Ovary (tissue), 10 donors: ENCODE measurements at regions of chr1 and their contacts with region 1.

Region 1: DNA sequence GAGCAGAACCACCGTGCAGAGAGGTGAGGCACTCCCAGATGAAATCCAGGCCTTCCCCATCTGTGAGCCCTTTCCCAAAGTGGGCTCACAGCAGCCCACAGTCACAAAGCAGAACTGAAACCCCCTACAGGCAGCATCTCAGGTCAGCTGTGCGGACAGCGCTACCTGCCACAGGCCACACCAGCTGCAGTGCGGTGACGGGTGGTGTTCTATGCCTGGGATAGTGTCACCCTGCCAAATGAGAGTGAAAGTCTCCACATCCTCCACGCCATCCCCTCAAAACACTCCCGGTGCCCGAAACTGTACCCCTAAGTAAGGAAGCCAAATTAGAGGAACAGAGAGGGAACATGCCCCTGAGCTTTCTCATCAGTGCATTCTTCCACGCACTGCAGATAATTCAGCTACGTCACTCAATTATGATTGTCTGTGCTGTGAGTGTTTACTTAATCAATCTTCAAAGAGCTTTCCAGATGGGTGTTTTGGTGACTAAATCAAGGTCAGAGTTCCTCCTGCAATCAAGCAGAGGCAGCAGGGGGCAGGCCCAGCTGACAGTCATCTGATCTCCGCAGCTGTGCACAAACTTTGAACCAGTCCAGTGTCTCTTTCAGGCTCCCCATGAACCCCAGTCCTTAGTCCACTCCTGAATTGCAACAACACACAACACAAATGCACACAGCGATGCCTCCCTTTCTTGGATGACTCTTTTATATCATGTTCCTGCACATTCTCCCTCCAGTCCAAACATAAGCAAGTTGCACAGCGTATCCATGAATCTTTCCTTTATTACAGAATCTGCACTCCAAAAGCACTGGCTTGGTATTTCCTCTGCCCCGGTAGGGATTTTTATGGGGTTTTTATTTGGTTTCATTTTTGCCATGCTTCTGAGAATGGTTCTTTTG is 150.0 kb downstream of the TOMM20 start:
- DNase-seq: peak in 1 of 5 donors; percentile 56
- H3K4me3 ChIP-seq: no peak overlapping the region
- H3K27ac ChIP-seq: peak overlapping the region in 1 of 2 donors; percentile 83
- H3K4me1 ChIP-seq: peaks cover 34% of the 10 kb centered on the region
- H3K27me3 ChIP-seq: no peaks in the 10 kb centered on the region
- CTCF ChIP-seq: no peak
- EP300 ChIP-seq: no peak
- POLR2A ChIP-seq: no peak

Region 2: DNA sequence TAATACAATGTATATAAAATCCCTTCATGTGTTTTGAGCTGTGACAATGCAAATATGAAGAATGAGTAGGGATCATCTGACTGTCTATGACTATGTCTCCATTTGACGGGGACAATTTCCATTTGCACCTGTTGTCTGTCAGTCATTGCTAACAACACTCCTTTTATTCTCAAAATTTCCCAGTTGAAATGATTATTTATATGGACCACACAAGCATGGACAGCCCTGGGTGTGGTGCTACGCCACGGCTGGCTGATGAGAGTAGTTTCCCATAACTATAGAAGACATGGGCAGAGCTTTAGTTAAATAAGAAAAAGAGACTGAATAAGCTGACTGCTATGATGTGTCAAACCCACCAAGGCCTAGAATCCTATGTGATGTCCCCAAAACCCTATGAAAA is 1515.3 kb before region 1 on chr1:
- intact Hi-C with region 1: no loop called
- DNase-seq: no peak
- H3K4me3 ChIP-seq: no peak overlapping the region
- H3K27ac ChIP-seq: no peak overlapping the region
- H3K4me1 ChIP-seq: no peaks in the 10 kb centered on the region
- H3K27me3 ChIP-seq: no peaks in the 10 kb centered on the region
- CTCF ChIP-seq: no peak
- EP300 ChIP-seq: no peak
- POLR2A ChIP-seq: no peak

Region 3: DNA sequence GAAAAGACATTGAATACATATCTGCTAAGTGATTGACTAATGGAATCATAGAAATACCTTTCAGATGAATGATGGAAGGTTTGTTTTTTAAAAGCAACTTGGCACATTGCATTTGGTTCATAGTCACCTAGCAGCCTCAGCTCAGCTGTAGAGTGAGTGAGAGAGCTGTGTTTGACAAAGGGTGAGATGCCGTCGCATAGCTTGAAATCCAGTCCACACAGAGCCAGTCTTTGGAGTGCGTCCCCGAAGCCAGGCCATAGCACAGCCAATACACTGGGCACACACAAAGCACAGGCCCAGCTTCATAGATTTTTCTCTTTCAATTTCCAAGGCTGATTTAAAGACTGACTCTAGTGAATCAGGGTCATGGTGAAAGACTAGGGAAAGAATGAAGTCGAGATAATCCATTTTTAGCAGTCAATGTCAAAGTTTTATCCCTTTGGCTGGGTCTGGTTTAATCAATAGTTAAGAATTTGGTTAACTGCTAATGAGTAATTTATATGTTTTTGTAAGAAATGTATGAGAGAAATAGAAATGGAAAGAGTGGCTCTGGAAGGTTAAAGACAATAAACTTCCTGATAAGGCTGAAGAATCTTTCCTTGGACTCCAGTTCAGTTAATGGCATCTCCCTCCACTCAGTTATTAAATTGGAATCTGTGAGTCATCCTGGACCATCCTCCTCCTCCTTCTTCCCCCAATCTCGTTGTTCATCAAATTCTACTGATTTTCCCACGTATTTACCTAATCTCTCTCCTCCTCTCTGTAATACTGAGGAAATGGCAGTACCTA is 267.5 kb before region 1 on chr1:
- intact Hi-C with region 1: no loop called
- DNase-seq: no peak
- H3K4me3 ChIP-seq: no peak overlapping the region
- H3K27ac ChIP-seq: no peak overlapping the region
- H3K4me1 ChIP-seq: peaks cover 2% of the 10 kb centered on the region
- H3K27me3 ChIP-seq: no peaks in the 10 kb centered on the region
- CTCF ChIP-seq: no peak
- EP300 ChIP-seq: no peak
- POLR2A ChIP-seq: no peak

Region 4: GRCh38 chr1:234918181-234918841 is 60.3 kb before region 1 on chr1:
- intact Hi-C with region 1: loop called in 1 of 4 experiments (anchors 10 kb)
- DNase-seq: peak in 1 of 5 donors; percentile 31
- H3K4me3 ChIP-seq: no peak overlapping the region
- H3K27ac ChIP-seq: peak overlapping the region; percentile 51 to 58
- H3K4me1 ChIP-seq: peaks cover 2% of the 10 kb centered on the region
- H3K27me3 ChIP-seq: no peaks in the 10 kb centered on the region
- CTCF ChIP-seq: no peak
- EP300 ChIP-seq: no peak
- POLR2A ChIP-seq: no peak

Region 5: DNA sequence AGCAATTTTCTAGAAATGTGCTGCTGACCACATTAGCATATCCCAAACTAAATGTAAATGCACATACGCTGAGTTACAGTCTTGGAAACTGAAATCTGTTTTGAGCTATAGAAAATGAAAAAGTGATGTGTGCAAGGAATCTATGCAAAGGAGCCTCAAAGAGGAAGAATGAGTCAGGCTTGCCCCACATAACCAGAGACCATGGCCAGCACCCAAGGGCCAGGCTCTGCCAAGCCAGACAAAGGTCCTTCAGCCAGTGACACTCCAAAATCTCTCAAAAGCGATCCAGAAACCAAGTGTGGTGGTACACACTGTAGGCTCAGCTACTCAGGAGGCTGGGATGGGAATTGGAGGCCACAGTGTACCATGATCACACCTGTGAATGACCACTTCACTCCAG is 45.2 kb before region 1 on chr1:
- intact Hi-C with region 1: no loop called
- DNase-seq: no peak
- H3K4me3 ChIP-seq: no peak overlapping the region
- H3K27ac ChIP-seq: no peak overlapping the region
- H3K4me1 ChIP-seq: peaks cover 2% of the 10 kb centered on the region
- H3K27me3 ChIP-seq: no peaks in the 10 kb centered on the region
- CTCF ChIP-seq: no peak
- EP300 ChIP-seq: no peak
- POLR2A ChIP-seq: no peak

Region 6: DNA sequence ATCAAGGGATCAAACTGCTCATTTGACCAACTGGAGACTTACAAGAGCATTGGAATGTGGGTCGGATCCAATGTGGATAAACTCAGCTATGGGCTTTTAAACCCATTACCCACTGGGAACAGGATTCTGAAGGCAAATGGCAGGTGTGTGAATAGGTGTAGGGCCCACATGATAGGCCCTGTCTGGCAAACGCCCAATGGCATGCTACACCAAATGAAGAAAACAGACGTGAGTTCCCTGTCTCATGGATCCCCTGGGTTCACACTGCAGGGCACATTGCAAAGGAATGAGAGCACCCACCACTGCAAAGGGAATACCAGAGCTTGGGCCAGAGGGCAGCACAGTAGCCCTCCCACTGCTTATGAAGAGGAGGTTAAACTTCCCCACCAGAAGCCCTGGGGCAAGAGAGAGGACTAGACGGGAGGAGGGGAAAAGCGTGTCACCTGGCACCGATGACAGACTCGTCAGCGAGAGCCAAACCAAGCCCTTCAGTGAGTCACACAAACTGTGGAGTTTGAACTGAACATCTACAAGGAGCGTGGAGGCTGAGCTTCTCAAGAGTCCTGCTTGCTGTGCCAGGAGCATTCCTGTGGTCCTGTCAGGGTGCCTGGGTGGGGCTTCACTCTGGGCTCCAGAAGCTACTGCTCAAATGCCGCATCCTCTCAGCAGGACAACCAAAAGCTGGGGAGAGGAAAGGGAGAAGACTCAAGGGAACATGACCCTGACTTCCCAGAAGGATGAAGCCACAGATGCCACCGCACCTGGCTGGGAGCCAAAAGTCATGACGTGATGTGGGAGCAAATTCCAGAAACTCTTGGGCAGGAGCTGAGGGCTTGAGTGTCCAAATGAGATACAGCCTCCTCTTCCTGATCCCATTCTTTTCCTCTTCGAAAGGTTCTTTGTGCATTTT is 88.9 kb after region 1 on chr1:
- intact Hi-C with region 1: loop called in 2 of 4 experiments (anchors 10 kb)
- DNase-seq: peak in 2 of 5 donors; percentile 51 to 64
- H3K4me3 ChIP-seq: no peak overlapping the region
- H3K27ac ChIP-seq: no peak overlapping the region
- H3K4me1 ChIP-seq: peaks cover 4% of the 10 kb centered on the region
- H3K27me3 ChIP-seq: no peaks in the 10 kb centered on the region
- CTCF ChIP-seq: no peak
- EP300 ChIP-seq: peak; percentile 39
- POLR2A ChIP-seq: no peak